Activated CD4-positive, alpha-beta T cell treated with anti-CD3 and anti-CD28 coated beads for 36 hours (primary cell): ENCODE measurements at regions of chr16 and their contacts with region 1.

Region 1: GRCh38 chr16:4116337-4117249 is at the start of gene ADCY9:
- DNase-seq: peak; percentile 86
- ATAC-seq: peak; percentile 75
- H3K4me3 Mint-ChIP-seq: peak within 1 kb of the TSS; percentile 78
- H3K27ac Mint-ChIP-seq: peak within 1 kb of the TSS; percentile 78
- H3K4me1 Mint-ChIP-seq: peaks cover 36% of the 10 kb centered on the region
- H3K27me3 Mint-ChIP-seq: peaks cover 7% of the 10 kb centered on the region
- total RNA-seq, gene ADCY9: 5.3 to 6.2 TPM

Region 2: GRCh38 chr16:3938848-3939624 is 177.6 kb before region 1 on chr16:
- CTCF ChIA-PET with region 1: no interaction called
- POLR2A ChIA-PET with region 1: no interaction called
- intact Hi-C with region 1: loop called in 1 of 2 experiments (anchors 1 kb)
- DNase-seq: peak; percentile 79
- ATAC-seq: peak; percentile 91
- H3K4me3 Mint-ChIP-seq: no peak overlapping the region
- H3K27ac Mint-ChIP-seq: no peak overlapping the region
- H3K4me1 Mint-ChIP-seq: peaks cover 2% of the 10 kb centered on the region
- H3K27me3 Mint-ChIP-seq: peaks cover 4% of the 10 kb centered on the region

Region 3: GRCh38 chr16:3983081-3983520 is 133.5 kb before region 1 on chr16:
- CTCF ChIA-PET with region 1: no interaction called
- POLR2A ChIA-PET with region 1: no interaction called
- intact Hi-C with region 1: loop called in 1 of 2 experiments (anchors 10 kb)
- DNase-seq: peak; percentile 74
- ATAC-seq: peak; percentile 94
- H3K4me3 Mint-ChIP-seq: no peak overlapping the region
- H3K27ac Mint-ChIP-seq: no peak overlapping the region
- H3K4me1 Mint-ChIP-seq: peaks cover 2% of the 10 kb centered on the region
- H3K27me3 Mint-ChIP-seq: no peaks in the 10 kb centered on the region

Region 4: DNA sequence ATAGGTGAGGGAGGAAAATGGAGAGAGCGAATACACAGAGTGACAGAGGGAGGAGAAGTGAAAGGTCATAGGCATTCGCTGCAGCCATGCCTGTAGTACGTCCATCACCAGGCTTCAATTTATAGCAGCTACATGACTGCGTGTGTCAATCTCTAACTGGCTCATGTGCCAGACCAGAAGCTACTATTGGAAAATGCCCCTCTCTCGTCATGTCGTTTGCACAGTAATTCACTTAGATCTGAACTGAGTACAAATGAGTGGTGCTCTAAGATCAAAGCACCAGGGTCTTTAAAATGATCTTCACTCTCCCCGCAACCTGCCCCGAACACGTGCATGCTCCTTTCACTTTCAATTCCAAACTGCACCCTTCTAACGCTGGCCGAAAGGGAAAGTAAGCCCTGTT is 51.6 kb before region 1 on chr16:
- CTCF ChIA-PET with region 1: no interaction called
- POLR2A ChIA-PET with region 1: no interaction called
- intact Hi-C with region 1: loop called in 1 of 2 experiments (anchors 10 kb)
- DNase-seq: peak; percentile 64
- ATAC-seq: peak; percentile 90
- H3K4me3 Mint-ChIP-seq: peak overlapping the region; percentile 67
- H3K27ac Mint-ChIP-seq: peak overlapping the region; percentile 58
- H3K4me1 Mint-ChIP-seq: peaks cover 21% of the 10 kb centered on the region
- H3K27me3 Mint-ChIP-seq: no peaks in the 10 kb centered on the region